ENCODE measurements at regions of chr1 and their contacts with region 1.

Region 1: GRCh38 chr1:173937062-173937461 is 19.9 kb upstream of the SERPINC1 start:
- DNase-seq: no peak
- ATAC-seq: no peak
- H3K4me3 ChIP-seq: no peak overlapping the region
- H3K4me3 Mint-ChIP-seq: no peak overlapping the region
- H3K27ac ChIP-seq: no peak overlapping the region
- H3K27ac Mint-ChIP-seq: no peak overlapping the region
- H3K4me1 ChIP-seq: no peaks in the 10 kb centered on the region
- H3K4me1 Mint-ChIP-seq: no peaks in the 10 kb centered on the region
- H3K27me3 ChIP-seq: no peaks in the 10 kb centered on the region
- H3K27me3 Mint-ChIP-seq: no peaks in the 10 kb centered on the region

Region 2: GRCh38 chr1:173853074-173853473 is 84.0 kb before region 1 on chr1:
- CTCF ChIA-PET with region 1: no interaction called
- POLR2A ChIA-PET with region 1: no interaction called
- DNase-seq: no peak
- ATAC-seq: no peak
- H3K4me3 ChIP-seq: no peak overlapping the region
- H3K4me3 Mint-ChIP-seq: no peak overlapping the region
- H3K27ac ChIP-seq: no peak overlapping the region
- H3K27ac Mint-ChIP-seq: no peak overlapping the region
- H3K4me1 ChIP-seq: no peaks in the 10 kb centered on the region
- H3K4me1 Mint-ChIP-seq: peaks cover 0 to 4% (median 0%) of the 10 kb centered on the region in 3 donors
- H3K27me3 ChIP-seq: no peaks in the 10 kb centered on the region
- H3K27me3 Mint-ChIP-seq: no peaks in the 10 kb centered on the region

Region 3: DNA sequence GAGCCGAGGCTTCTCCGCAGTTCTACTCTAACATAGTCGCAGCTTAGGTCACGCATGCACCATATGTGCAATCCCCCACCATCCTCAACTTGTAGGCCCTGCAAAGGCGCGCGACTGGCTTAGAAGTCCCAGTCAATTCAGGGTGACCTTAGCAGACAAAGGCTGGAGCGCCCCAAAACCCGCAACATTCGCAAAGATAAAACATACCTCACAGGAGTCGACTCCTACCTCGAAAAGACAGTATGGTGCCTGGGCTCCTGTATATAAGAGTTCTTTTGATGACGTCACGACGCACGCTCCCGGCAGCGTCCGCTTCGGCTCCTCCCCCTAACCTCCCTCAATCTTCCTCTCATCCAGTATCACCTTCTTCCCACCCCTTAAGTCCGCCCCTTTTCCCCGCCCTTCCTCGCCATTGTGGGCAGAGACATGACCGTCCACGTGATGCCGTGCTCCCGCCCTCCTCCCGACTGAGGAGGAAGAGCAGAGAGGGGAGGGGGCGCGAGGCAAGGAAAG is 69.3 kb before region 1 on chr1 and contains the start of gene GAS5:
- CTCF ChIA-PET with region 1: interaction called in 1 of 2 experiments, 11 read pairs
- POLR2A ChIA-PET with region 1: no interaction called
- DNase-seq: peak; percentile 96 to 100 (median 98)
- ATAC-seq: peak; percentile 82 to 83 (median 83)
- H3K4me3 ChIP-seq: peak within 1 kb of the TSS; percentile 83 to 94
- H3K4me3 Mint-ChIP-seq: peak within 1 kb of the TSS; percentile 92 to 96 (median 95)
- H3K27ac ChIP-seq: peak within 1 kb of the TSS; percentile 93
- H3K27ac Mint-ChIP-seq: peak within 1 kb of the TSS; percentile 97 to 98
- H3K4me1 ChIP-seq: peaks cover 24 to 48% of the 10 kb centered on the region in 2 experiments
- H3K4me1 Mint-ChIP-seq: peaks cover 74 to 83% (median 77%) of the 10 kb centered on the region in 3 donors
- H3K27me3 ChIP-seq: no peaks in the 10 kb centered on the region
- H3K27me3 Mint-ChIP-seq: no peaks in the 10 kb centered on the region
- total RNA-seq, gene GAS5: 638 to 881 (median 772) TPM

Region 4: GRCh38 chr1:174051956-174052355 is 114.9 kb after region 1 on chr1:
- CTCF ChIA-PET with region 1: no interaction called
- POLR2A ChIA-PET with region 1: interaction called in 1 of 2 experiments, 14 read pairs
- DNase-seq: no peak
- ATAC-seq: no peak
- H3K4me3 ChIP-seq: no peak overlapping the region
- H3K4me3 Mint-ChIP-seq: no peak overlapping the region
- H3K27ac ChIP-seq: no peak overlapping the region
- H3K27ac Mint-ChIP-seq: no peak overlapping the region
- H3K4me1 ChIP-seq: no peaks in the 10 kb centered on the region
- H3K4me1 Mint-ChIP-seq: peaks cover 0 to 2% (median 0%) of the 10 kb centered on the region in 3 donors
- H3K27me3 ChIP-seq: peaks cover 0 to 12% of the 10 kb centered on the region in 2 experiments
- H3K27me3 Mint-ChIP-seq: peaks cover 0 to 2% of the 10 kb centered on the region in 2 donors

Region 5: GRCh38 chr1:174131021-174131638 is 194.1 kb after region 1 on chr1:
- CTCF ChIA-PET with region 1: no interaction called
- POLR2A ChIA-PET with region 1: no interaction called
- DNase-seq: no peak
- ATAC-seq: no peak
- H3K4me3 ChIP-seq: no peak overlapping the region
- H3K4me3 Mint-ChIP-seq: no peak overlapping the region
- H3K27ac ChIP-seq: no peak overlapping the region
- H3K27ac Mint-ChIP-seq: no peak overlapping the region
- H3K4me1 ChIP-seq: no peaks in the 10 kb centered on the region
- H3K4me1 Mint-ChIP-seq: peaks cover 0 to 3% (median 0%) of the 10 kb centered on the region in 3 donors
- H3K27me3 ChIP-seq: peaks cover 0 to 3% of the 10 kb centered on the region in 2 experiments
- H3K27me3 Mint-ChIP-seq: peaks cover 0 to 5% of the 10 kb centered on the region in 2 donors

Measured in T-cell (primary cell).